ENCODE measurements at regions of chr2 and their contacts with region 1.

Region 1: GRCh38 chr2:39492095-39492590 is 55.1 kb upstream of the MAP4K3 start:
- DNase-seq: peak; percentile 94
- H3K4me3 ChIP-seq: peak overlapping the region; percentile 54
- H3K27ac ChIP-seq: peak overlapping the region; percentile 92
- H3K4me1 ChIP-seq: peaks cover 63% of the 10 kb centered on the region
- CTCF ChIP-seq: no peak

Region 2: GRCh38 chr2:39356922-39357639 is 135.1 kb before region 1 on chr2:
- CTCF ChIA-PET with region 1: no interaction called
- POLR2A ChIA-PET with region 1: no interaction called
- intact Hi-C with region 1: no loop called
- DNase-seq: no peak
- H3K4me3 ChIP-seq: no peak overlapping the region
- H3K27ac ChIP-seq: no peak overlapping the region
- H3K4me1 ChIP-seq: no peaks in the 10 kb centered on the region
- CTCF ChIP-seq: no peak

Region 3: DNA sequence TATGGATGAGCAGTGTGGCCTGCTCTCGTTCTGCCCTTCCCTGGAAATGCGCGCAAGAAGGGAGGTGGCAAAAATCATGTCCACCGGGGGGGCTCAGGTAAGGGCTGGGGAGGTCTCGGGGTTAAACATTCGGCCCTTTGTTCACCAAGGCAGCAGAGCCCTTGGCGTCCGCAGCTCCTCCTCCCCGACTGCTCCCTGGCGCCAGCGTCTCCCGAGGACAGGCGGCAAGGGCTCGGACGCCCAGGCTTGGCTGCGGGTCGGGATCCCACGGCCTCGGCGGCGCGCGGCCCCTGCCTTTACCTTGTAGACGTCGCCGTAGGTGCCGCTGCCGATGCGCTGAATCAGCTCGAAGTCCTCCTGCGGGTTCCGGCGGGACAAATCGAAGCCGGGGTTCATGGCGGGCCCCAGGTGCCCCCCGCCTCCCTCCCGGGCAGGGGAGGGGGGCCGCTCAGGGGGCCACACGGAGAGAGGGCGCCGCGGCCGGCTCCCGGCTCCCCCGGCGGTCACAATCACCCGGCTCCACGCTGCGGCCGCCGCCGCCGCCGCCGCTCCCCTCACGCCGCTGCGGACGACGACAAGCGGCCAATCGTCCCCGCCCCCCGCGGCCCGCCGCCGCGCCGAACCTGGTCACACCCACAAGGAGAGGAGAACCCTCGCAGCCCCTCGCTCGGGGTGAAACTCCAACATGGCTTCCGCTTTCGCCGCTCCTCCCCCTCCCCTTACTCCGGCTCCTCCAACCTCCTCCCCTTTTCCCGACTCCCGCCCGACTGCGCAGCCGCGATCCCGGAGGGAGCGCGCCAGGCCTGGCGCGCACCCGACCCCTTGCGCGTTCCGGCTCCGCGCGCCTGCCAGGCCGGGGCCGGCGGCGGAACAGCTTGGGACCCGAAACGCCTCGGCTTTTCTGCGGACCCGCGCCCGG is 55.3 kb before region 1 on chr2 and contains the start of gene MAP4K3:
- CTCF ChIA-PET with region 1: no interaction called
- POLR2A ChIA-PET with region 1: interaction called, 6 read pairs
- intact Hi-C with region 1: loop called (anchors 1 kb)
- DNase-seq: peak; percentile 87
- H3K4me3 ChIP-seq: peak within 1 kb of the TSS; percentile 87
- H3K27ac ChIP-seq: peak within 1 kb of the TSS; percentile 61
- H3K4me1 ChIP-seq: peaks cover 32% of the 10 kb centered on the region
- CTCF ChIP-seq: no peak
- total RNA-seq, gene MAP4K3: 10.7 and 12.4 TPM in 2 replicates

Region 4: DNA sequence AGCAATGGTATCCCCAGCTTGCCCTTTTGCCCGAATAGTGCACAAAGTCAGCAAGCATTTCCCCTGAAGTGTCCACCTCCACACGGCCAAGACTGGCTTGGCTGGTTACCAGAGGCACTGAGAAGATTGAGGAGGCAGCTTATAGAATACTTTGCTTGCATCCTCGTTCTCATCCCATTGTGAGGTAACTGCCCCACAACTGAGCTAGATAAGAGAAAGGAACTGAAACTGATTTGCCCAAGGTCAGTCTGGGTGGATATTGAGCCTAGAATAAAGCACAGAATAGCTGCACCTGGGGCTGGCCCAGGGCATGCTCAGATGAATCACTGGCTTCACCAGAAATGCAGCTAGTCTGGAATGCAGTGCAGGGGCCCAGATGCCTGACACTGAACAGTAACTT is 22.3 kb before region 1 on chr2:
- CTCF ChIA-PET with region 1: interaction called, 4 read pairs
- POLR2A ChIA-PET with region 1: interaction called, 7 read pairs
- intact Hi-C with region 1: loop called (anchors 1 kb)
- DNase-seq: peak; percentile 82
- H3K4me3 ChIP-seq: peak overlapping the region; percentile 27
- H3K27ac ChIP-seq: peak overlapping the region; percentile 45
- H3K4me1 ChIP-seq: peaks cover 34% of the 10 kb centered on the region
- CTCF ChIP-seq: no peak

Region 5: DNA sequence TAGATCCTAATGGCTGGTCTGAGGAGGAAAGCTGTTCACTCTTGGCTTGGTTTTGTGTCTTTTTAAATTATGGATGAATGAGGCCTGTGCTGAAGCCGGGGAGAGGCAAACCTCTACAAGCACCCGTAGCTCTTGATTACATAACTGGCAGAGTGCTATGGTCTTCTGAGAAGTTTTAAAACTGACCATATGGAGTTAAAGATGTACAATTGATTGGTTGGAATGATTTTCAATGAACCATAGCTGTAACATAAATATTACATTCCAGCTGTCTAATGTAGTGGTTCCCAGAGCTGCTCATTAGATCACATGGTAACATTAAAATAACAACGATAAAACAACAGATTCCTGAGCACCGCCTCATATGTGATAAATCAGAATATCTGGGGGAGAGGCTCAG is 16.1 kb after region 1 on chr2:
- CTCF ChIA-PET with region 1: no interaction called
- POLR2A ChIA-PET with region 1: interaction called, 11 read pairs
- intact Hi-C with region 1: no loop called
- DNase-seq: no peak
- H3K4me3 ChIP-seq: no peak overlapping the region
- H3K27ac ChIP-seq: no peak overlapping the region
- H3K4me1 ChIP-seq: peaks cover 15% of the 10 kb centered on the region
- CTCF ChIP-seq: no peak